BJ (cell line): ENCODE measurements at regions of chr1 and their contacts with region 1.

Region 1: GRCh38 chr1:33055210-33056008 is 18.7 kb upstream of the AK2 start:
- DNase-seq: no peak
- H3K4me3 ChIP-seq: no peak overlapping the region
- H3K27me3 ChIP-seq: no peaks in the 10 kb centered on the region
- CTCF ChIP-seq: peak; percentile 79

Region 2: GRCh38 chr1:33072707-33073106 is 17.3 kb after region 1 on chr1:
- CTCF ChIA-PET with region 1: interaction called, 10 read pairs
- POLR2A ChIA-PET with region 1: no interaction called
- DNase-seq: no peak
- H3K4me3 ChIP-seq: no peak overlapping the region
- H3K27me3 ChIP-seq: peaks cover 7% of the 10 kb centered on the region
- CTCF ChIP-seq: no peak

Region 3: GRCh38 chr1:33176362-33176850 is 121.0 kb after region 1 on chr1:
- CTCF ChIA-PET with region 1: no interaction called
- POLR2A ChIA-PET with region 1: no interaction called
- DNase-seq: no peak
- H3K4me3 ChIP-seq: no peak overlapping the region
- H3K27me3 ChIP-seq: no peaks in the 10 kb centered on the region
- CTCF ChIP-seq: no peak

Region 4: DNA sequence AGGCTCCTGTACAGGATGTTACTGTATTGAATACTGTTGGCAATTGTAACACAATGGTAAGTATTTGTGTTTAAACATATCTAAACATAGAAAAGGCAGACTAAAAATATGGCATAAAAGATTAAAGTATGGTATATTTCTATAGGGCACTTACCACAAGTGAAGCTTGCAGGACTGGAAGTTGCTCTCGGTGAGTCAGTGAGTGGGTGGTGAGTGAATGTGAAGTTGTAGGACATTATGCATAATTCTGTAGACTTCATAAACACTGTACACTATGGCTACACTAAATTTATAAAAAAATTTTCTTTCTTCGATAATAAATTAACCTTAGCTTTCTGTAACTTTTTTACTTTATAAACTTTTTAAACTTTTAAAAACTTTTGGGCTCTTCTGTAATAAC is 140.1 kb after region 1 on chr1:
- CTCF ChIA-PET with region 1: no interaction called
- POLR2A ChIA-PET with region 1: no interaction called
- DNase-seq: no peak
- H3K4me3 ChIP-seq: no peak overlapping the region
- H3K27me3 ChIP-seq: peaks cover 5% of the 10 kb centered on the region
- CTCF ChIP-seq: no peak